PC-3 (cell line): ENCODE measurements at regions of chr3 and their contacts with region 1.

Region 1: GRCh38 chr3:71549951-71550350 is 33.6 kb downstream of the FOXP1 start:
- DNase-seq: no peak
- ATAC-seq: no peak
- H3K4me3 ChIP-seq: no peak overlapping the region
- H3K27ac ChIP-seq: no peak overlapping the region
- H3K4me1 ChIP-seq: peaks cover 12% of the 10 kb centered on the region
- H3K27me3 ChIP-seq: no peaks in the 10 kb centered on the region
- CTCF ChIP-seq: no peak

Region 2: GRCh38 chr3:70943886-70944285 is 606.1 kb before region 1 on chr3:
- CTCF ChIA-PET with region 1: no interaction called
- POLR2A ChIA-PET with region 1: interaction called, 23 read pairs
- intact Hi-C with region 1: no loop called
- DNase-seq: peak; percentile 6
- ATAC-seq: no peak
- H3K4me3 ChIP-seq: no peak overlapping the region
- H3K27ac ChIP-seq: no peak overlapping the region
- H3K4me1 ChIP-seq: no peaks in the 10 kb centered on the region
- H3K27me3 ChIP-seq: no peaks in the 10 kb centered on the region
- CTCF ChIP-seq: no peak

Region 3: GRCh38 chr3:71578054-71578755 is 28.3 kb after region 1 on chr3:
- CTCF ChIA-PET with region 1: no interaction called
- POLR2A ChIA-PET with region 1: interaction called, 3 read pairs
- intact Hi-C with region 1: loop called (anchors 1 kb)
- DNase-seq: peak; percentile 75
- ATAC-seq: peak; percentile 21
- H3K4me3 ChIP-seq: peak overlapping the region; percentile 7; the same call in 1 of the 2 replicates
- H3K27ac ChIP-seq: no peak overlapping the region
- H3K4me1 ChIP-seq: peaks cover 38% of the 10 kb centered on the region
- H3K27me3 ChIP-seq: no peaks in the 10 kb centered on the region
- CTCF ChIP-seq: no peak